Mammary epithelial cell (primary cell): ENCODE measurements at regions of chr5 and their contacts with region 1.

Region 1: GRCh38 chr5:134059758-134060495 is 54.6 kb upstream of the TCF7 start:
- DNase-seq: no peak
- H3K4me3 ChIP-seq: no peak overlapping the region
- H3K27ac ChIP-seq: peak overlapping the region; percentile 88
- H3K4me1 ChIP-seq: peaks cover 27% of the 10 kb centered on the region
- H3K27me3 ChIP-seq: no peaks in the 10 kb centered on the region
- CTCF ChIP-seq: no peak

Region 2: GRCh38 chr5:133944263-133945185 is 115.4 kb before region 1 on chr5:
- CTCF ChIA-PET with region 1: no interaction called
- dilution Hi-C with region 1: no loop called
- in situ Hi-C with region 1: no loop called
- intact Hi-C with region 1: no loop called
- DNase-seq: peak; percentile 44
- H3K4me3 ChIP-seq: no peak overlapping the region
- H3K27ac ChIP-seq: no peak overlapping the region
- H3K4me1 ChIP-seq: no peaks in the 10 kb centered on the region
- H3K27me3 ChIP-seq: no peaks in the 10 kb centered on the region
- CTCF ChIP-seq: peak; percentile 71 to 82

Region 3: GRCh38 chr5:134092878-134093277 is 33.0 kb after region 1 on chr5:
- CTCF ChIA-PET with region 1: no interaction called
- dilution Hi-C with region 1: no loop called
- in situ Hi-C with region 1: no loop called
- intact Hi-C with region 1: loop called (anchors 5 kb)
- DNase-seq: peak; percentile 90
- H3K4me3 ChIP-seq: no peak overlapping the region
- H3K27ac ChIP-seq: no peak overlapping the region
- H3K4me1 ChIP-seq: peaks cover 14% of the 10 kb centered on the region
- H3K27me3 ChIP-seq: peaks cover 3% of the 10 kb centered on the region
- CTCF ChIP-seq: no peak